GM10248 (cell line): ENCODE measurements at regions of chr18 and their contacts with region 1.

Region 1: DNA sequence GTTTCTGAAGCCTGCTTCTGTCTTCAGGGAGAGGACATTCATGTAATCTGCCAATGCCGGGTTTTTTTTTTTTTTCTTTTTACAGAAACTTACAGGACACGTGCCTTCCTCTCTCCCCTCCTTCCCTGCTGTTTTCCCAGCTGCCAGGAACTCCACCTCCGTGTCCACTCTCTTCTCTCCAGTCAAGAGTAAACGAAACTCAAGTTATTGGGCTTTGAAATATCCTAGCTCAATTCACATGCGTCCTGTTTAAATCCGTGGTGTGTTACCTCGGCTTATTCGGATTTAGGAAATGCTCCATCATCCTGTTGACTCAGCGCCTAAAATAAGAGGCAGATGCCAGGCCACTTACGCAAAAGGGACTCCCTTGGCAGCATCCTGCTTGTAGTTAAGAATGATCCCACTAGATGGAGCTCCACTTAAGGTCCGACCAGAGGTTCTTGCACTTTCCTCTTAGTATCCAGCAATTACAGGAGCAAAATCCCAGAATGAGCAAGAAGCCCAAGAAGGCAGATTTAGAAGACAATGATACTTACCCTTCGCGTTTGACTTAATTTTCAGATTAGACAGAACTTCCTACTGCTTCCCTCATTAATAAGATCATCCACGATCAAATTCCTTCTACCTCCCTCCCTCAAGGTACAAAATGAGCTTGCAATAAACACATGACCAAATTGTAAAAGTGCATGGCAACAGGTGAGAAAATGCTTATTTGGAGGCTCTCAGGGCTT is 97.2 kb upstream of the ZCCHC2 start:
- DNase-seq: peak; percentile 56
- CTCF ChIP-seq: peak; percentile 83

Region 2: GRCh38 chr18:62144338-62144737 is 281.3 kb before region 1 on chr18:
- CTCF ChIA-PET with region 1: no interaction called
- POLR2A ChIA-PET with region 1: no interaction called
- DNase-seq: no peak
- CTCF ChIP-seq: no peak

Region 3: GRCh38 chr18:62437235-62438017 is 11.8 kb after region 1 on chr18:
- CTCF ChIA-PET with region 1: interaction called, 10 read pairs
- POLR2A ChIA-PET with region 1: no interaction called
- DNase-seq: no peak
- CTCF ChIP-seq: no peak

Region 4: GRCh38 chr18:62464266-62464665 is 38.6 kb after region 1 on chr18:
- CTCF ChIA-PET with region 1: no interaction called
- POLR2A ChIA-PET with region 1: no interaction called
- DNase-seq: no peak
- CTCF ChIP-seq: no peak

Region 5: DNA sequence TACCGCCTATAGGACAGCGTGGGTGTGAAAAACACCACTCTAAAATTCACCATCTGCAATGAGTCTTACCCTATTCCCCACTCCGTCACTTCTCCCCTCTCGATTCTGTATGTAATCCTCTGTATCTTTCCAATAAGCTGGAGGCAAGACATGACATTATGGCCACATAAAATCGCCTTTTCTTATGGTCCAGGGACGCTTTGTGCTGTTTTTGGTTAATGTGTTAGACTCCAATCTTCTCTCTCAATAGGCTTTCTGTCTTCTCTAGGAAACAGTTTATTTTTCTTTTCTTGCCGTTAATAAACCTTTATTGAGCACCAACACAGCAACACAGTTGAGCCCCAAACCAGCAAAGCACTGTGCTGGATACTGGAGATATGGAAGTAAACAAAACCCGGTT is 59.3 kb after region 1 on chr18:
- CTCF ChIA-PET with region 1: no interaction called
- POLR2A ChIA-PET with region 1: no interaction called
- DNase-seq: no peak
- CTCF ChIP-seq: no peak

Region 6: GRCh38 chr18:62576845-62577512 is 151.3 kb after region 1 on chr18:
- CTCF ChIA-PET with region 1: interaction called, 24 read pairs
- POLR2A ChIA-PET with region 1: no interaction called
- DNase-seq: peak; percentile 42
- CTCF ChIP-seq: no peak

Region 7: GRCh38 chr18:62637807-62638687 is 212.4 kb after region 1 on chr18:
- CTCF ChIA-PET with region 1: no interaction called
- POLR2A ChIA-PET with region 1: no interaction called
- DNase-seq: peak; percentile 72
- CTCF ChIP-seq: peak; percentile 56